ENCODE measurements at regions of chr11 and their contacts with region 1.

Region 1: DNA sequence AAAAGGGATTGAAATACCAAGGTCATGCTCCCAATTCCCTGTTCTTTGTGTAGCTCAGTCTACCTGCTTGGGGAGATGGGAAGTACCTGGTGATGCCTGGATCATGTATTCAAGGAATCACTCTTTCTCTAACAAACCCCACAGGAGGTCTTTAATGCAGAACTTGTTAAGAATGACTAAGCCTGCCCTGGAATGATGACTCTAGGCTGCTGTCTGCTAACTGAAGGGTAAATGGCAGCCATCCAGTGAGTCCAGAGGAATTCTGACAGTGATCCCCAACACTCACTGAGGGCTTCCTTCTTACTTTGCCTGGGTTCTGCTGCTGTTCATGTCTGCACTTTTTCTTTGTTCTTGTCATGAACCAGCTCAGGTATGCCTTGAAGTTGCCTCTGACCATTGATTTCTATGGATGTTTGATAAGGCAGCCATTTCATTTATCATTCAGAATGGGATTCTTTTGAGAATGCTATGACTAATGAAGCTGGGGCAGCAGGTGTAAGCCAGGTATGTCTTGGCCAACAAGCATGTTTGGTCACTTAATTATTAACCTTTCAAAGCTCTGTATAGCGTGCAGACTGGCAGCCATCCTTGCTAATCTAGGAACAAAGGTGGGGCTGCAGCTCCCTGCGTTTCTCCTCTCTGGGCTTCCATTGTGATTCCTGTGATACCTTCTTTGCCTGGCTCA is 11.4 kb downstream of the PRSS23 start:
- DNase-seq: peak; percentile 92 to 95
- H3K4me3 ChIP-seq: no peak overlapping the region
- H3K4me3 Mint-ChIP-seq: peak overlapping the region; percentile 49
- H3K27ac Mint-ChIP-seq: peak overlapping the region; percentile 92
- H3K4me1 ChIP-seq: peaks cover 98% of the 10 kb centered on the region
- H3K4me1 Mint-ChIP-seq: peaks cover 92% of the 10 kb centered on the region
- H3K27me3 ChIP-seq: no peaks in the 10 kb centered on the region
- H3K27me3 Mint-ChIP-seq: no peaks in the 10 kb centered on the region
- CTCF ChIP-seq: no peak

Region 2: GRCh38 chr11:86469491-86470393 is 342.0 kb before region 1 on chr11:
- CTCF ChIA-PET with region 1: no interaction called
- POLR2A ChIA-PET with region 1: interaction called, 12 read pairs
- intact Hi-C with region 1: loop called (anchors 1 kb)
- DNase-seq: peak; percentile 89 to 91
- H3K4me3 ChIP-seq: no peak overlapping the region
- H3K4me3 Mint-ChIP-seq: peak overlapping the region; percentile 36
- H3K27ac Mint-ChIP-seq: peak overlapping the region; percentile 70
- H3K4me1 ChIP-seq: peaks cover 44% of the 10 kb centered on the region
- H3K4me1 Mint-ChIP-seq: peaks cover 58% of the 10 kb centered on the region
- H3K27me3 ChIP-seq: no peaks in the 10 kb centered on the region
- H3K27me3 Mint-ChIP-seq: no peaks in the 10 kb centered on the region
- CTCF ChIP-seq: no peak

Region 3: GRCh38 chr11:86483940-86484794 is 327.6 kb before region 1 on chr11:
- CTCF ChIA-PET with region 1: interaction called, 3 read pairs
- POLR2A ChIA-PET with region 1: no interaction called
- intact Hi-C with region 1: loop called (anchors 1 kb)
- DNase-seq: peak; percentile 90 to 93
- H3K4me3 ChIP-seq: no peak overlapping the region
- H3K4me3 Mint-ChIP-seq: peak overlapping the region; percentile 1
- H3K27ac Mint-ChIP-seq: peak overlapping the region; percentile 77
- H3K4me1 ChIP-seq: peaks cover 54% of the 10 kb centered on the region
- H3K4me1 Mint-ChIP-seq: peaks cover 57% of the 10 kb centered on the region
- H3K27me3 ChIP-seq: no peaks in the 10 kb centered on the region
- H3K27me3 Mint-ChIP-seq: no peaks in the 10 kb centered on the region
- CTCF ChIP-seq: no peak

Region 4: GRCh38 chr11:86523738-86524619 is 287.8 kb before region 1 on chr11:
- CTCF ChIA-PET with region 1: interaction called, 3 read pairs
- POLR2A ChIA-PET with region 1: no interaction called
- intact Hi-C with region 1: loop called (anchors 1 kb)
- DNase-seq: peak; percentile 89 to 91
- H3K4me3 ChIP-seq: no peak overlapping the region
- H3K4me3 Mint-ChIP-seq: peak overlapping the region; percentile 38
- H3K27ac Mint-ChIP-seq: peak overlapping the region; percentile 88
- H3K4me1 ChIP-seq: peaks cover 57% of the 10 kb centered on the region
- H3K4me1 Mint-ChIP-seq: peaks cover 45% of the 10 kb centered on the region
- H3K27me3 ChIP-seq: no peaks in the 10 kb centered on the region
- H3K27me3 Mint-ChIP-seq: no peaks in the 10 kb centered on the region
- CTCF ChIP-seq: no peak

Region 5: GRCh38 chr11:86620891-86621521 is 190.8 kb before region 1 on chr11:
- CTCF ChIA-PET with region 1: interaction called, 6 read pairs
- POLR2A ChIA-PET with region 1: no interaction called
- intact Hi-C with region 1: loop called (anchors 5 kb)
- DNase-seq: no peak
- H3K4me3 ChIP-seq: no peak overlapping the region
- H3K4me3 Mint-ChIP-seq: no peak overlapping the region
- H3K27ac Mint-ChIP-seq: peak overlapping the region; percentile 39
- H3K4me1 ChIP-seq: peaks cover 40% of the 10 kb centered on the region
- H3K4me1 Mint-ChIP-seq: peaks cover 32% of the 10 kb centered on the region
- H3K27me3 ChIP-seq: no peaks in the 10 kb centered on the region
- H3K27me3 Mint-ChIP-seq: no peaks in the 10 kb centered on the region
- CTCF ChIP-seq: no peak

Region 6: DNA sequence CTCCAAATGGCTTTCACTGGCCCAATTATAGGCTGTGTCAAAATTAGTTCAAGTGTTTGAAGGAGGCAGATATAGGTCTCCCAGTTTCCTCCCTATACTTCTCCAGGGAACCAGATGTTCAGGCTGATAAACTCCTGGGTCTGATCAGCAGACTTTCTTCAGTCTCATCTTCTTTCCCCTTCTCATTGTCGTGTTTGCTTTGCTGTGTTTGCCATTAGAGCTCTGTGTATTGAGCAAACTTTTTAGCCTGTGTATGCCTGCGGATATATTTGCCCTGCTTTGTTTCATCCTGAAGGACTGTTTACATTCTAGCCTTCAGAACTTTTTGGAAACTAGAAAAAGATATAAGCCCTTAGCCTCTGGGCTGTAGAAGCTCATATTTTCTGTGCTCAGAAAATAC is 105.5 kb before region 1 on chr11:
- CTCF ChIA-PET with region 1: no interaction called
- POLR2A ChIA-PET with region 1: no interaction called
- intact Hi-C with region 1: loop called (anchors 1 kb)
- DNase-seq: peak; percentile 70 to 74
- H3K4me3 ChIP-seq: no peak overlapping the region
- H3K4me3 Mint-ChIP-seq: no peak overlapping the region
- H3K27ac Mint-ChIP-seq: peak overlapping the region; percentile 2
- H3K4me1 ChIP-seq: peaks cover 37% of the 10 kb centered on the region
- H3K4me1 Mint-ChIP-seq: peaks cover 45% of the 10 kb centered on the region
- H3K27me3 ChIP-seq: no peaks in the 10 kb centered on the region
- H3K27me3 Mint-ChIP-seq: no peaks in the 10 kb centered on the region
- CTCF ChIP-seq: no peak

Region 7: GRCh38 chr11:86775342-86775741 is 36.4 kb before region 1 on chr11:
- CTCF ChIA-PET with region 1: no interaction called
- POLR2A ChIA-PET with region 1: no interaction called
- intact Hi-C with region 1: no loop called
- DNase-seq: no peak
- H3K4me3 ChIP-seq: no peak overlapping the region
- H3K4me3 Mint-ChIP-seq: no peak overlapping the region
- H3K27ac Mint-ChIP-seq: no peak overlapping the region
- H3K4me1 ChIP-seq: peaks cover 8% of the 10 kb centered on the region; the same call in 1 of the 2 replicates
- H3K4me1 Mint-ChIP-seq: peaks cover 11% of the 10 kb centered on the region
- H3K27me3 ChIP-seq: no peaks in the 10 kb centered on the region
- H3K27me3 Mint-ChIP-seq: no peaks in the 10 kb centered on the region
- CTCF ChIP-seq: no peak

Measured in Caco-2 (cell line).